Left ventricle myocardium inferior (tissue), 1 donor: ENCODE measurements at regions of chr15 and their contacts with region 1.

Region 1: DNA sequence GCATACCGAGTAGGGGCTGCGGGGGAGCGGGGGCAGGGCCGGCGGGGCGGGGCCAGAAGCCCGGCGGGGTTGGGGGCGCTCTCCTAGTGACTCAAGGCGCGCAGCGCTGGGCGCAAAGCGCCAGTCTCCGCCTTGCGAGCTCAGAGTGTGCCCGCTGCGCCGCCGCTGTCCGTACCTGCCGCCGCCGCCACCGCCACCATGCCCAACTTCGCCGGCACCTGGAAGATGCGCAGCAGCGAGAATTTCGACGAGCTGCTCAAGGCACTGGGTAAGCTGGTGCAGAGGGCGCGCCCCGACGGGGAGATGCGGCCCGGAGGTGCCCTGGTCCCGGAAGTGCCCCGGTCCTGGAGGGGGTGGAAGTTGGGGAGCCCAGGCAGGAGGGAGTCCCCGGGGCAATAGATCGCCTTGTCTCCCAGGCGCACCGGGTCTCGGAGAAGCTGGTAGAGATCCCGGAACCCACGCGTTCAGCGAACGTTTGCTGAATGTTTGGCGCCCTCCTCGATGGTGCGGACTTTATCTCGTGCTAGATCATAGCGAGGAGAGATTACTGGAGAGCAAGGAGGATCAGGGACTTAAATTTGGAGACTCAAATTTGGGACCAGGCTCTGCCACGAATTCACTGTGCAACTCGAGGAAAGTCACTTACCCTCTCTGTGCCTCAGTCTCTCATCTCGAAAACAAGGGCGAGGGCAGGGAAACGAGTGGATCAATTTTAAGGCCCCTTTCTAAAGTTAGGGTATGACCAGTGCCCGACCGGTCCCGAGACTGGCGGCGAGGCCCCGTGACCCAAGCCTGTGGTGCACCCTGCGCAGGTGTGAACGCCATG is at the start of gene CRABP1:
- DNase-seq: no peak
- H3K4me3 ChIP-seq: peak within 1 kb of the TSS; percentile 47
- H3K27ac ChIP-seq: no peak within 1 kb of the TSS
- H3K4me1 ChIP-seq: peaks cover 19% of the 10 kb centered on the region
- H3K27me3 ChIP-seq: peaks cover 75% of the 10 kb centered on the region
- CTCF ChIP-seq: no peak
- total RNA-seq, gene CRABP1: not detected

Region 2: DNA sequence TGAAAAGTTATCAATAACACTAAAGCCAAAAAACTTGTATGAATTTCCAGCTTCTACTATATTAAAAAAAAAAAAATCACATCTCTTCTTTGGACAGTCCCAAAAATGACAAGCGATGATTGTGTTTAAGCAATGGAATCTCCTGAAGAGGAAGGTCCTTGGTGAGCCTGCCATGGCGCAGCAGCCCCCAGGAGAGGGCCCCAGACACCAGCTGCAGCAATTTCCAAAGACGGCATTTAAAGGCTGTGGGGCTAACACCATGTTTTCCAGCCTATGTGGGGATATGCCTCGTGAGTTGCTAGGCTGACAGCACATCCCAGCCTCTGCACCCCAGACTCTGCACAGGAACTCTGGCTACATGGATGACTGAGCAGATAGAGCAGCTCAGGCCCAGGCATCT is 55.7 kb before region 1 on chr15:
- intact Hi-C with region 1: no loop called
- DNase-seq: no peak
- H3K4me3 ChIP-seq: no peak overlapping the region
- H3K27ac ChIP-seq: no peak overlapping the region
- H3K4me1 ChIP-seq: no peaks in the 10 kb centered on the region
- H3K27me3 ChIP-seq: no peaks in the 10 kb centered on the region
- CTCF ChIP-seq: no peak

Region 3: DNA sequence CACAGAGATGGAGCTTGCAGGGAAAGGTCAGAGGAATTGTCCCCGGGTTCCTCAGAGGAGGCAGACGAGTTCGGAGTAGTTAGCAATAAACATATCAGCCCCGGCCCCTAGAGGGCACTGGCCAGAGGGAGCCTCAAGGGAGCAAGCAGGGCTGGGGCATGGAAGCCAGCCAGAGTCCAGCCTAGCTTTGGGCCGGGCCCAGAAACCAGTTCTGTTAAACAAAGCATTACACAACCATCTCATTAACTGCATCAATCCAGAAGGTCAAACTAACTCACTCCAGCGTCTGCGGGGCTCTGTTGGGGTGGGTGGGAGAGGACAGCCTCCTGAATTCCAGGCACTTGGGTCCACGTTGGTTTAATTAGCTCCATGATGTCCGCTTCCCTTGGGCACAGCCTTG is 56.5 kb after region 1 on chr15:
- intact Hi-C with region 1: loop called (anchors 10 kb)
- DNase-seq: peak; percentile 25
- H3K4me3 ChIP-seq: no peak overlapping the region
- H3K27ac ChIP-seq: no peak overlapping the region
- H3K4me1 ChIP-seq: no peaks in the 10 kb centered on the region
- H3K27me3 ChIP-seq: peaks cover 42% of the 10 kb centered on the region
- CTCF ChIP-seq: peak; percentile 37